Endothelial cell of umbilical vein (primary cell): ENCODE measurements at regions of chr5 and their contacts with region 1.

Region 1: GRCh38 chr5:10695055-10695649 is 65.9 kb downstream of the DAP start:
- DNase-seq: peak; percentile 72
- H3K4me3 ChIP-seq: no peak overlapping the region
- H3K27ac ChIP-seq: no peak overlapping the region
- H3K4me1 ChIP-seq: peaks cover 15% of the 10 kb centered on the region
- H3K27me3 ChIP-seq: no peaks in the 10 kb centered on the region
- CTCF ChIP-seq: peak; percentile 76 to 77
- POLR2A ChIP-seq: no peak

Region 2: GRCh38 chr5:10401498-10401897 is 293.7 kb before region 1 on chr5:
- CTCF ChIA-PET with region 1: no interaction called
- POLR2A ChIA-PET with region 1: no interaction called
- dilution Hi-C with region 1: no loop called
- intact Hi-C with region 1: no loop called
- DNase-seq: no peak
- H3K4me3 ChIP-seq: no peak overlapping the region
- H3K27ac ChIP-seq: no peak overlapping the region
- H3K4me1 ChIP-seq: no peaks in the 10 kb centered on the region
- H3K27me3 ChIP-seq: no peaks in the 10 kb centered on the region
- CTCF ChIP-seq: no peak
- POLR2A ChIP-seq: no peak

Region 3: DNA sequence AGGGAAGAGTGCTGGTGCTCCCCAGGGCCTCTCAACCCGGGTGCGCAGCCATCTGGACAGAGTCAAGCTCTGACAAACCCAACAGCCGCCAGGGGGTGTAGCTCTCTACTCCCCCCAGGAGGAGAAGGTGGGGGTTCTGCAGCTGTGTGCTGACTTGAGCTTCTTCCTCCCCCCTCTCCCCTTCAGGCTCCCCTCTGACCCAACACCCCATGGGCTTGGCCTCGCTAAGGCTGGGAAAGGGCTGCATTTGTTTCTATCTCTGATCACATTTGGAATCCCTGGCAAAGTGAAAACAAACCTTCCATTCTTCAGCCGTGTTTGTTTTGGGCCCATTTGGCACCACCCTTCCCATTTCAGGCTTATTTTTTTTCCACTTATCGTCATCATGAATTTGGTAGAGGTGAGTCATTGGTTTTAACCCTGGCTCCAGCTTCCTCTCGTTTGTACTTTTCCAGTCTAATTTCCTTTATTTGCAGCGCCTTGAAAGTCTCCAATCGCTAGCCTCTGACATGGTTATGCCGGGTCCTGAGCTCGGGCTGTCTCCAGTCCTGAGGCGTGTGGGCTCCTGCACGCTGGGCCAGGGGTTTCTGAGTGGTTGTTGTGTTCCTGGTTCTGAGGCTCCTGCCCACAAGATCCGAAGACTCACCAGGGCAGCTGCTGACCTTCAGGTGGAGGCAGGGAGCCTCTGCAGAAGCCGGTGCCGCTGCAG is 29.8 kb after region 1 on chr5:
- CTCF ChIA-PET with region 1: interaction called, 13 read pairs
- POLR2A ChIA-PET with region 1: interaction called, 3 read pairs
- dilution Hi-C with region 1: no loop called
- intact Hi-C with region 1: no loop called
- DNase-seq: peak; percentile 97
- H3K4me3 ChIP-seq: peak overlapping the region in 1 of 3 experiments; percentile 21
- H3K27ac ChIP-seq: peak overlapping the region; percentile 81
- H3K4me1 ChIP-seq: peaks cover 53% of the 10 kb centered on the region
- H3K27me3 ChIP-seq: no peaks in the 10 kb centered on the region
- CTCF ChIP-seq: peak; percentile 60 to 81
- POLR2A ChIP-seq: peak; percentile 47

Region 4: DNA sequence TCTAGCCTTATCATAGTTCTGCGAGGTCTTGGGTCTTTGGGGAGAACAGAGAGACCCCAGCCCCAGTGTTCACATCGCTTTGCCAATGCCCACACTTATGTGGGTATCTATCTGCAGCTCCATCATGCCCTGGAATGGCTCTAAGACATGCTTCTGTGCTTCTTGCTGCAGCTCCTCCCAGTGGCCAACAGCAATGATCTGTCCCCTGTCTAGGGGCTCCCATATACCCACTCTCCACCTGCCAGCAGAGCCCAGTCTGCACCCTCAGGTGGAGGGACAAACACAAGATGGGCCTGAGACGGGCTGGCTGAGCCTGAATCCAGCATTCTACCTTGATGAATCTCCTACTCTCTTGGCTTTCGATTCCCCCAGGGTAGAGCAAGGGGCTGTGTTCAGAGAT is 80.5 kb after region 1 on chr5:
- CTCF ChIA-PET with region 1: interaction called, 34 read pairs
- POLR2A ChIA-PET with region 1: no interaction called
- dilution Hi-C with region 1: no loop called
- intact Hi-C with region 1: loop called (anchors 5 kb)
- DNase-seq: no peak
- H3K4me3 ChIP-seq: no peak overlapping the region
- H3K27ac ChIP-seq: no peak overlapping the region
- H3K4me1 ChIP-seq: no peaks in the 10 kb centered on the region
- H3K27me3 ChIP-seq: peaks cover 17 to 18% of the 10 kb centered on the region in 2 experiments
- CTCF ChIP-seq: peak; percentile 4 to 32
- POLR2A ChIP-seq: no peak

Region 5: DNA sequence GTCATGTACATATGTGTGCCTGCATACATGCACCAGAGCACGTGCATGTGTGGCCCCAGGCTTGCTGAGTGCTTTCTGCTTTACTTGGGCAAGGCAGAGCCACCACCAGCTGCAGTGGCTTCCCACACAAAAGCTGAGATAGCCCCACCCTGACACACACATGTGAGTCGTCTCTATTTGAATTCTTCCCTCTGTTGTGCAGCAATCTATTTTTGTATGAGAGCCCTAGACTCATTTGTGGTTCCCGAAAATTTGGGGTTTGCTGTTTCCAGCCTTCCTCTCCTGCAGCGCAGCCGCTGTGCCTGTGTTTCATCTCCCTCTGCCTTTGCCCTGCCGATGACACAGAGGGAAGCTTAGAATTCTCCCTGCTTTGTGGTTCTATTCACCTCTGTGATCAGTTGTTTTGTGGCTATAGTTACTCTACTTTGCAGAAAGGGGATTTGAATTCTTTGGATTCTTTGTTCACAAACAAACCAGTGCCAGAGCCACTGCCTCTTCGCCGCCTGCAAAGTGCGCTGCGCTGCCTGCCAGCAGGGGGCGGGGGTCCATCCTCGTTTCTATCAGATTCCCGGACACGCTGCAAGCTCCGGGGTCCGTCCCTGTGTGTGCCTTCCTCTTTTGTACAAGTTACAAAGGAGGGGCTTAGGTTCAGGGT is 161.7 kb after region 1 on chr5:
- CTCF ChIA-PET with region 1: interaction called, 38 read pairs
- POLR2A ChIA-PET with region 1: no interaction called
- dilution Hi-C with region 1: no loop called
- intact Hi-C with region 1: loop called (anchors 2 kb)
- DNase-seq: peak; percentile 30
- H3K4me3 ChIP-seq: no peak overlapping the region
- H3K27ac ChIP-seq: no peak overlapping the region
- H3K4me1 ChIP-seq: no peaks in the 10 kb centered on the region
- H3K27me3 ChIP-seq: peaks cover 8 to 14% of the 10 kb centered on the region in 2 experiments
- CTCF ChIP-seq: peak; percentile 88 to 94
- POLR2A ChIP-seq: no peak

Region 6: DNA sequence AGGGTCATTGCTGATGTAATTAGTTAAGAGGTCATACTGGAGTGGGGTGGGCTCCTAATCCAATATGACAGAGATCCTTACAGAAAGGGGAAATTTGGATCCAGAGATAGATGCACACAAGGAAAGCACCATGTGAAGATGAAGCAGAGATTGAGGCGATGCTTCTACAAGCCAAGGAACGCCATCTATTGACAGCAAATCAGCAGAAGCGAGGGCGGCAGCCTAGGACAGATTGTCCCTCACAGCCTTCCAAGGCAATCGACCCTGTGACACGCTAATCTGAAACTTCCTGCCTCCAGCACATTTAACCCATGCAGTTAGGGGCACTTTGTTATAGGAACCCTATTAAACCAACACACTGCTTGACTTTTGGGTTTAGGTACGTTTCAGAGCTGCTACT is 351.0 kb after region 1 on chr5:
- CTCF ChIA-PET with region 1: no interaction called
- POLR2A ChIA-PET with region 1: no interaction called
- dilution Hi-C with region 1: no loop called
- intact Hi-C with region 1: loop called (anchors 5 kb)
- DNase-seq: no peak
- H3K4me3 ChIP-seq: no peak overlapping the region
- H3K27ac ChIP-seq: no peak overlapping the region
- H3K4me1 ChIP-seq: no peaks in the 10 kb centered on the region
- H3K27me3 ChIP-seq: no peaks in the 10 kb centered on the region
- CTCF ChIP-seq: no peak
- POLR2A ChIP-seq: no peak

Region 7: GRCh38 chr5:11268891-11269290 is 573.7 kb after region 1 on chr5:
- CTCF ChIA-PET with region 1: no interaction called
- POLR2A ChIA-PET with region 1: no interaction called
- dilution Hi-C with region 1: no loop called
- intact Hi-C with region 1: loop called (anchors 10 kb)
- DNase-seq: no peak
- H3K4me3 ChIP-seq: no peak overlapping the region
- H3K27ac ChIP-seq: no peak overlapping the region
- H3K4me1 ChIP-seq: no peaks in the 10 kb centered on the region
- H3K27me3 ChIP-seq: no peaks in the 10 kb centered on the region
- CTCF ChIP-seq: no peak
- POLR2A ChIP-seq: no peak

Region 8: DNA sequence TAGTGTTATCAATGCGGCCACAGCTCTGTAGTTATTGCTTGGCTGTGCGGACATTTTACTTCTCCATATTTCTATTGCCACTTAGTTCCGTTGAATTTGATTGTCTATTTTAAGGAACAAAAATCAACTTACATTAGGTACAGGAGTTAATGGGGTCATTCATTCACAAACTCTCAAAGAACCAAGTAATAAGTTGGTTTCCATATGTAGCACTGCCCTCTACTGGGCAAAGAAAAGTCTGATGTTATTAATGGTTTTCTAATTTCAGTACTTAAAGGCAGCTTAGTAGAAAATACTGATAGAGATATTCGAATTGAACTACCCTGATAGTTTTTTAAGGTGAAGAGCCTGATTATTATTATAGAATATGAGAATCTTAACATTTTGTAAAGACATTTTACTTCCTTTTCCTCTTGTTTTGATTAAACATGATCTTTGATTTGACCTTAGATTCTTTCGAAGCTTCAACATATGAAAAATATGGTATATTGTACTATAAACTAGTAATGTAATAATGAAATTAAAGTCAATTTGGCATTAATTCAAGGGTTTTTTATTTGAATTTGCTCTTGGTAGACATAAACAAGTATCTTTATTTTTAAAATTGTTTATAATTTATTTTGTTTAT is 1328.6 kb after region 1 on chr5:
- CTCF ChIA-PET with region 1: interaction called, 22 read pairs
- POLR2A ChIA-PET with region 1: no interaction called
- dilution Hi-C with region 1: no loop called
- intact Hi-C with region 1: no loop called
- DNase-seq: peak; percentile 34
- H3K4me3 ChIP-seq: no peak overlapping the region
- H3K27ac ChIP-seq: no peak overlapping the region
- H3K4me1 ChIP-seq: no peaks in the 10 kb centered on the region
- H3K27me3 ChIP-seq: no peaks in the 10 kb centered on the region
- CTCF ChIP-seq: peak; percentile 25 to 28
- POLR2A ChIP-seq: no peak